Tibial artery (tissue), 4 donors: ENCODE measurements at regions of chr15 and their contacts with region 1.

Region 1: DNA sequence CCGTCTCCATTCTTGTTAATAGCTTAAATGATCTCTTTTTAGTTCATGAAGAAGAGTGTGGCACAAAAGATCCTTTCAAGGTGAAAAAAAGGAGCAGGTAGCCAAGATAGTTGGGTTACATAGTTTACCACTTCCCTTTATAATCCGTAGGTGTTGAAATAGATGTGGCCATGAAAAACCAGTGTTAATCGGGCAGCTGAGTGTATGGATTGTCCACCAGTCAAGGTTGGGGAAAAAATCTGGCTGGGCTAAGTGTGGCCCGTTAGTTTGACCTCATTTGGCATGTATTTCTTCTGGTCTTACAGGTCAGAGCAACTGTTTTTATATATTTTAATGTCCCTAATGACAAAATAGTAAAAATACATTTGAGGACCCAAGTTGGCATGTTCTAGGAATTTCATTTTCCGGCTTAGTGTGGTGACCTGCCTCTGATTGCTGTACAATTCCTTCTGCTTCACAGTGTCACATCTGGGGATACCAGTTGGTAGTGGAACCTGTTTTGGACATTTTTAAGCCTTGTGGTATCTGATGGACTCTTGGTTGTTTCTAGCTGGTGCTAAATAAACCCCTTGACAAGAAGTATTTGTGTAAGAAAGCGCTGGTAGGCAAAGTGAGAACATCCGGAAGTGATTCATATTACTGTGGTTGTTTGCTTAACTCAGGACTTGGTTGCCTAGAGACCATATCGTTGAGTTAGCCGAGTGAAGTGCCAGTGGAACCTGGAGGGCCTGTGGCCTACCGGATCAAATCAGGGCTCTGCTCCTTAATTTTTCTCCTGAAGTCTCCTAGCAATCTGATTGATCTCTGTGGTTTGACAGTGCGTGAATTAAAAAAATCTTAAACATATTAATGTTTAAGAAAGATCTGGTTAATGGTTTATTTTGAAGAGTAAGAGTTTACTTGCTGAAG is 12.6 kb downstream of the IQGAP1 start:
- DNase-seq: peak; percentile 81 to 83
- H3K4me3 ChIP-seq: peak overlapping the region in 1 of 2 donors; percentile 34
- H3K27ac ChIP-seq: peak overlapping the region; percentile 86 to 93
- H3K4me1 ChIP-seq: peaks cover 0 to 98% (median 75%) of the 10 kb centered on the region in 4 donors
- H3K27me3 ChIP-seq: no peaks in the 10 kb centered on the region
- CTCF ChIP-seq: no peak

Region 2: GRCh38 chr15:89494935-89495637 is 905.6 kb before region 1 on chr15:
- intact Hi-C with region 1: no loop called
- DNase-seq: peak in 1 of 2 donors; percentile 27
- H3K4me3 ChIP-seq: no peak overlapping the region
- H3K27ac ChIP-seq: no peak overlapping the region
- H3K4me1 ChIP-seq: peaks cover 0 to 9% (median 7%) of the 10 kb centered on the region in 4 donors
- H3K27me3 ChIP-seq: peaks cover 0 to 86% of the 10 kb centered on the region in 2 donors
- CTCF ChIP-seq: no peak

Region 3: DNA sequence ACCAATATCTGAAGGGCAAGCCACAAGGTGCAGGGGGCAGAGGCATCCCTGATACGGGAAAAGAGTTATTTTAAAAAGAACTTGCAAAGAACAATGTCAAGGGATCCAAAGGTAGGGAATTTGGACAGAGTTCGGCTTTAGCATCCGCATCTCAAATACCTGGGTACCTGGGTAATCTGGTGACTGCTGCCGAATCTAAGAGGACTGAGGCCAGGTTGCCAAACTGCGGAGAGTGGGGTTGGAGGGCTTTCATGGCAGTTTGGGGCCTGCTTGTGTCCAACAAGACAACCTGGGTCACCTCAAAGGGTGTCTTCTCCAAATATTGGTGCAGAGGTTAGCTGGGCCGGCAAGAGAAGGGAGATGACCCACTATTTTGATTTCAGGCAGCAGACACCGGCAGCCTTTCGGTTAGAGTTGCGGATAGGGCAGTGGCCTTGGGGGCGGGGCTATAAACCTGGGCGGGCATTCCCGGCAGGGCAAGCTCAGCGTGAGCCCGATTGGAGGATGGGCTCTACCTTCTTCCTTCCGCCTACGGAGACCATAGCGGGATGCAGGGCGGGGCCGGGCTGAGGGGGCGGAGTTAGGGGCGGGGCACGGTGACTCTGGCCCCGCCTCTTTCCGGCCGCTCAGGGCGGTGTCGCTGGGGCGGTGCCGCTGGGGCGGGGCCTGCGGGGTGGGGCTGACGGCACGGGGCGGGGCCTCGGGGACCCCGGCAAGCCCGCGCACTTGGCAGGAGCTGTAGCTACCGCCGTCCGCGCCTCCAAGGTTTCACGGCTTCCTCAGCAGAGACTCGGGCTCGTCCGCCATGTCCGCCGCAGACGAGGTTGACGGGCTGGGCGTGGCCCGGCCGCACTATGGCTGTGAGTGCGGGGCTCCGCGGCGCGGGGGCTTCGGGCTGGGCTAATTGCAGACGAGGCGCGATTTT is 12.9 kb before region 1 on chr15 and contains the start of gene IQGAP1:
- intact Hi-C with region 1: loop called (anchors 1 kb)
- DNase-seq: peak; percentile 97 to 99
- H3K4me3 ChIP-seq: peak within 1 kb of the TSS; percentile 79 to 99
- H3K27ac ChIP-seq: peak within 1 kb of the TSS; percentile 98 to 100
- H3K4me1 ChIP-seq: peaks cover 4 to 38% (median 26%) of the 10 kb centered on the region in 4 donors
- H3K27me3 ChIP-seq: no peaks in the 10 kb centered on the region
- CTCF ChIP-seq: no peak